ENCODE measurements at regions of chr10 and their contacts with region 1.

Region 1: DNA sequence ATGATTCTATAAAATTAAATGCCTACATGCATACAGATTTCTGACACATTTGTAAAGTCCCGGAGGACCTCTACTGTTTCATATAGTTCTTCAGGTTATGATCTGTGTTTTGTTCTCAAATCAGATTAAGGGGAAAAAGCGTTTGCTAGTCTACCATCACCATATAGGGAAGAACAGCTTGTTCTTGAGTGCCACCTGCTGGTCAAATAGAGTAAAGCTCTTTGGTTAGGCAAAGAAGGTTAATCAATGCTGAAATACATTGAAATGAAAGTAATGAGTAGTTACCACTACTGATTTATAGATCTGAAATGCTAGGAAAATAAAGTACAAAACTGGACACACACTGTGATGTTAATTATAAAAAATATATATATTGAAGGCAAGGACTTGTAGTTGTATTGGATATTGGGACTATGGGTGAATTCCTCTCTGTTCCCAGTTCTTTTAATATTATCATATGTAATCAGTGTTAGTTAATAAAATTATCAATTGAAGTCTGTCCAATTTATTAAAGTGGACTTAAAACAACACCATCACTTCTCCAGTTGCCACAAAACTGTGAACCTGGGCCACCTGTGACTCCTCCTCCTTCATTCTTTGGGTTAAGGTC is 72.6 kb upstream of the PDLIM1 start:
- DNase-seq: no peak
- ATAC-seq: peak; percentile 85
- H3K4me3 Mint-ChIP-seq: no peak overlapping the region
- H3K27ac Mint-ChIP-seq: no peak overlapping the region
- H3K4me1 Mint-ChIP-seq: peaks cover 2% of the 10 kb centered on the region
- H3K27me3 Mint-ChIP-seq: no peaks in the 10 kb centered on the region
- CTCF ChIP-seq: no peak

Region 2: DNA sequence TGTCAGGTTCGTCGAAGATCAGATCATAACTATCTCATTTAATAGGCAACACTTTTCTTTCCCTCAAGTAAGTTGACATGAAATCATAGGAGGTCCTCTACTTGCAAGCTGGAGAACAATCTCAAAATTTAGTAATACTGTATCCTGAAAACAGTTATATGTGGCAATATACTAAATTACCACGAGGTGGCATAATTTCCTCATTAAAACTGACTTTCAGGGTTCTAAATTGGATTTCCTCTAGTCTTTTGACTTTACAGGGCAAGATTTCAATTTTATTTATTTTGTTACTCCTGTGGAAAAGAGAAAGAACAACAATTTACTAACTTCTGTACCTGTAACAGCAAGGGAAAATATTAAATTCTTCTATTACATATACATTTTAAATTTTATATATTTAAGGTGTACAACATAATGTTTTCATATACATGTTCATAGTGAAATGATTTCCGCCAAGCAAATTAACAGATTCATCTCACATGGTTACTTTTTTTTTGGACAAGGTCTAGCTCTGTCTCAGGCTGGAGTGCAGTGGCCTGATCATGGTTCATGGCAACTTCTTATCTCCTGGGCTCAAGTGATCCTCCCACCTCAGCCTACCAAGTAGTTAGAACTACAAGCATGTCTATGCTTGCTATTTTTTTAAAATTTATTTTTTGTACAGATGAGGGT is 733.3 kb before region 1 on chr10:
- CTCF ChIA-PET with region 1: interaction called, 3 read pairs
- POLR2A ChIA-PET with region 1: no interaction called
- intact Hi-C with region 1: loop called (anchors 1 kb)
- DNase-seq: no peak
- ATAC-seq: no peak
- H3K4me3 Mint-ChIP-seq: no peak overlapping the region
- H3K27ac Mint-ChIP-seq: no peak overlapping the region
- H3K4me1 Mint-ChIP-seq: no peaks in the 10 kb centered on the region
- H3K27me3 Mint-ChIP-seq: no peaks in the 10 kb centered on the region
- CTCF ChIP-seq: peak; percentile 77

Region 3: DNA sequence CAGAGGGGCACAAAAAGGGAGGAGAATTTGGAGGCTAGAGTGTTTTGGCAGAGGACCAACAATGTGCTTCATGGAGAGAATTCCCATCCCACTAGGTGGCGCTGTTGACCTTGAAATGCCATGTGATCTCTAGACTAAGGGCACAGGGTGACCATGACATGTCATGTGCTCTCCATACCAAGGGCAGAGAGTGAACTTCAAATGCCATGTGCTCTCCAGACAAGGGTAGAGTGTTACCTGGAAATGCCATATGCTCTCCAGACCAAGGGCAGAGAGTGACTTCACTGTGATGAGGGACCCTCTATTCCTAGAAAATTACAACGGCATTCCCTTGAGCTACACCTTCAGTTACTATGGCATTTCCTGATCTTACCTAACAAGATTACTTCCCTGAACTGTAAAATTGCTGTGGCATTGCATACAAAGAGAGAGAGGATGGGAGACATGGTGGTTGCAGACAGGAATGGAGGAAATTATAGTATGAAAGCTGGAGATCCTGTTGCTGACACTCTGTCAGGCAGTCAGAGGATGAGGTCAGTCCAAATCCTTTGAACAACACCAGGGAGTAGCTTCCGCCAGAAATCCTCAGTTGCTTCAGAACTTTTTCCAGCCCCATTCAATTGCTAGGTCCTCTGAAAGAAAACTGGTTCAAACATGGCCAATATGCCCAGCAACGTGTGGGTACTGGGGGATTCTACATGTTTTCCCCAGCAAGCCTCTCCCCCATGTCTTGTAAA is 230.2 kb before region 1 on chr10:
- CTCF ChIA-PET with region 1: interaction called, 15 read pairs
- POLR2A ChIA-PET with region 1: no interaction called
- intact Hi-C with region 1: loop called (anchors 1 kb)
- DNase-seq: peak; percentile 43
- ATAC-seq: peak; percentile 65
- H3K4me3 Mint-ChIP-seq: no peak overlapping the region
- H3K27ac Mint-ChIP-seq: no peak overlapping the region
- H3K4me1 Mint-ChIP-seq: no peaks in the 10 kb centered on the region
- H3K27me3 Mint-ChIP-seq: peaks cover 1% of the 10 kb centered on the region
- CTCF ChIP-seq: no peak

Region 4: GRCh38 chr10:95183271-95184230 is 179.9 kb before region 1 on chr10:
- CTCF ChIA-PET with region 1: interaction called, 16 read pairs
- POLR2A ChIA-PET with region 1: no interaction called
- intact Hi-C with region 1: loop called (anchors 1 kb)
- DNase-seq: peak; percentile 87
- ATAC-seq: peak; percentile 96
- H3K4me3 Mint-ChIP-seq: peak overlapping the region; percentile 83
- H3K27ac Mint-ChIP-seq: peak overlapping the region; percentile 84
- H3K4me1 Mint-ChIP-seq: peaks cover 7% of the 10 kb centered on the region
- H3K27me3 Mint-ChIP-seq: no peaks in the 10 kb centered on the region
- CTCF ChIP-seq: peak; percentile 68

Region 5: DNA sequence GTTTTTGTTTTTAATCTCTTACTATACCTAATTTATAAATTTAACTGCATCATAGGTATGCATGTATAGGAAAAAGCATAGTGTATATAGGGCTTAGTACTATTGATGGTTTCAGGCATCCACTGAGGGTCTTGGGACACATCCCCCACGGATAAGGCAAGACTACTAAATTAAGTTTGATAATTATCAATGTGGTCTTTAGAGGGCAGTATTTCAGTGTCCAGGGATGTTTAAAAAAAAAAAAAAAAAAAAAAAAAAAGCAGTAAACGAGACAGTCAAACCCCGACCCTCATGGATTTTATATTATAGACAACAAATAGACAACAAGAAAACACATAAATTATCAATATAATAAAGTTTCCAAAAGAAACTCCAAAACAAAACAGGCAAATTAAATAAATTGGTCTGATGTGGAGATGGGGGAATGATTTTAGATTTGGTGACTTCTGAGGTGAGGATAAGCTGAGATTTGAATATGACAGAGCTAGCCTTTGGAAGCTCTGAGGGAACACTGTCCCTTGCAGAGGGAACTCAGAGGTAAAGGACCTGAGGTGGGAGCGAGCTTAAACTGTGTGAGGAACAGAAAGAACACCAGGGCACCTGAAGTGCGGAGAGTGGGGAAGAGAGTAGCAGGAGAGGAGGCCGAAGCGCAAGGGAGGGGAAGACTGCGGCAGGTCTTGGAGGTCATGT is 154.6 kb before region 1 on chr10:
- CTCF ChIA-PET with region 1: interaction called, 4 read pairs
- POLR2A ChIA-PET with region 1: no interaction called
- intact Hi-C with region 1: loop called (anchors 1 kb)
- DNase-seq: no peak
- ATAC-seq: no peak
- H3K4me3 Mint-ChIP-seq: no peak overlapping the region
- H3K27ac Mint-ChIP-seq: no peak overlapping the region
- H3K4me1 Mint-ChIP-seq: no peaks in the 10 kb centered on the region
- H3K27me3 Mint-ChIP-seq: no peaks in the 10 kb centered on the region
- CTCF ChIP-seq: no peak

Region 6: DNA sequence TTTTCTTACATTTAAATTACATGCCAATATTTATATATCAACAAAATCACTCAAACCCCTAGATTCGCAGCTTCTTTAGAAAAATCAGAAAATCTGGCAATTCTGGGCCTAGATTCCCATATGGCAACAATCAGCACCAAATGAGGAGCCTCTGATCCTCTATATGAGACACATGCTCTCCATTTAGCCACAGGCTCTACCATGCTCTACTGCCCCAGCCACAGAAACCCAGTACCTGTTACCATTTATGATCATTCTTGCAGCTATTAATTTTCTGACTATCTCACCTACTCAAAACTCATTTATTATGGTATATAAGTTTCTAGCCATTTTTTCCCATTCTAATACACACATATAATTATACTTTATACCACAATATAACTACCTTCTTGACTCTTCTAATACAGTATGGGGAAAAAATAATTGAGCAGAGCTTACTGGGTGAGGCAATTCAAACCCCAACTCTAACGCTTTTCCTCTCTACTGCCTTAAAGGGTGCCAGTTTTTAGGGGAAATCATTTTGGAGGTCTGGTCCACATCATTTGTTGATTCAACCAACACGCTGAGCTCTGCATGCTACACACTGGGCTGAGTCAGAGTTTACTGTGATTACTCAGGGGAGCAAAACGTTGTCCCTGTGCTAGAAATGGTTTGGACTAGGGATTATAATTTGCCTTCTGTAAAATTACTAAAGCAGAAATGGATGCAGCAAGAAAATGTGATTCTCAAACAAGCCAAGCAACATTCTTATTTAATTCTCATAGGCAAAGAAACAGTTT is 84.2 kb before region 1 on chr10:
- CTCF ChIA-PET with region 1: interaction called, 17 read pairs
- POLR2A ChIA-PET with region 1: interaction called, 3 read pairs
- intact Hi-C with region 1: no loop called
- DNase-seq: no peak
- ATAC-seq: no peak
- H3K4me3 Mint-ChIP-seq: no peak overlapping the region
- H3K27ac Mint-ChIP-seq: no peak overlapping the region
- H3K4me1 Mint-ChIP-seq: peaks cover 72% of the 10 kb centered on the region
- H3K27me3 Mint-ChIP-seq: no peaks in the 10 kb centered on the region
- CTCF ChIP-seq: no peak

Region 7: GRCh38 chr10:95308389-95309302 is 54.8 kb before region 1 on chr10:
- CTCF ChIA-PET with region 1: no interaction called
- POLR2A ChIA-PET with region 1: no interaction called
- intact Hi-C with region 1: no loop called
- DNase-seq: no peak
- ATAC-seq: no peak
- H3K4me3 Mint-ChIP-seq: no peak overlapping the region
- H3K27ac Mint-ChIP-seq: no peak overlapping the region
- H3K4me1 Mint-ChIP-seq: peaks cover 31% of the 10 kb centered on the region
- H3K27me3 Mint-ChIP-seq: no peaks in the 10 kb centered on the region
- CTCF ChIP-seq: no peak

Region 8: DNA sequence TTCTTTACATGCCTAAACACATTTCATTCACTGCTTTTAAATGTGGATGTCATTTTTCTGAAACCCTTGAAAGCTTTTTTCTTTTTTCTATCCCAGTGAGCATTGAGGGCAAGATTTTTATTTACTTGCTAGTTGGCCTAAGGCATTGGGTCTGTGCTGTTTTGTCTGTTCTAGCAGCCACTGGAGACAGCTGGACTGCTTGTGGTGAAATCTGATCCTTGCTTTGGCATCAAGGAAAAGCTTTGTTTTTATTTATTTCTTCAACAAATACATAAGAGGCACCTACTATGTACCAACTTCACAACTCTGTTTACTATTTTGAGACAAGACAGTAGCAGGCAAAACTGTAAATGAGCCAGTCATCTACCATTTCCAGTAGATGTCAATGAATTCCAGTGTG is 44.2 kb before region 1 on chr10:
- CTCF ChIA-PET with region 1: no interaction called
- POLR2A ChIA-PET with region 1: no interaction called
- intact Hi-C with region 1: no loop called
- DNase-seq: no peak
- ATAC-seq: no peak
- H3K4me3 Mint-ChIP-seq: no peak overlapping the region
- H3K27ac Mint-ChIP-seq: no peak overlapping the region
- H3K4me1 Mint-ChIP-seq: peaks cover 10% of the 10 kb centered on the region
- H3K27me3 Mint-ChIP-seq: peaks cover 2% of the 10 kb centered on the region
- CTCF ChIP-seq: no peak

Region 9: GRCh38 chr10:95374597-95375209 is 11.3 kb after region 1 on chr10:
- CTCF ChIA-PET with region 1: interaction called, 41 read pairs
- POLR2A ChIA-PET with region 1: interaction called, 3 read pairs
- intact Hi-C with region 1: no loop called
- DNase-seq: no peak
- ATAC-seq: peak; percentile 64
- H3K4me3 Mint-ChIP-seq: no peak overlapping the region
- H3K27ac Mint-ChIP-seq: no peak overlapping the region
- H3K4me1 Mint-ChIP-seq: no peaks in the 10 kb centered on the region
- H3K27me3 Mint-ChIP-seq: peaks cover 38% of the 10 kb centered on the region
- CTCF ChIP-seq: no peak

Measured in activated B cell treated with CpG ODN at 0.5 μM for 24 hours (primary cell).